Activated CD4-positive, alpha-beta T cell treated with anti-CD3 and anti-CD28 coated beads for 36 hours (primary cell): ENCODE measurements at regions of chr19 and their contacts with region 1.

Region 1: GRCh38 chr19:2782936-2783780 is at the start of gene SGTA:
- DNase-seq: peak; percentile 98
- ATAC-seq: peak; percentile 84
- H3K4me3 Mint-ChIP-seq: peak within 1 kb of the TSS; percentile 91
- H3K27ac Mint-ChIP-seq: peak within 1 kb of the TSS; percentile 98
- H3K4me1 Mint-ChIP-seq: peaks cover 58% of the 10 kb centered on the region
- H3K27me3 Mint-ChIP-seq: no peaks in the 10 kb centered on the region
- total RNA-seq, gene SGTA: 53.0 to 62.2 TPM

Region 2: GRCh38 chr19:2427429-2428320 is 355.5 kb before region 1 on chr19 and contains the start of gene TIMM13:
- CTCF ChIA-PET with region 1: no interaction called
- POLR2A ChIA-PET with region 1: no interaction called
- intact Hi-C with region 1: loop called in 1 of 2 experiments (anchors 1 kb)
- DNase-seq: peak; percentile 98
- ATAC-seq: peak; percentile 95
- H3K4me3 Mint-ChIP-seq: peak within 1 kb of the TSS; percentile 86
- H3K27ac Mint-ChIP-seq: peak within 1 kb of the TSS; percentile 96
- H3K4me1 Mint-ChIP-seq: peaks cover 5% of the 10 kb centered on the region
- H3K27me3 Mint-ChIP-seq: no peaks in the 10 kb centered on the region
- total RNA-seq, gene TIMM13: 70.7 to 104 TPM

Region 3: GRCh38 chr19:2702162-2703076 is 80.7 kb before region 1 on chr19 and contains the start of gene GNG7:
- CTCF ChIA-PET with region 1: no interaction called
- POLR2A ChIA-PET with region 1: no interaction called
- intact Hi-C with region 1: loop called in 1 of 2 experiments (anchors 1 kb)
- DNase-seq: peak; percentile 99
- ATAC-seq: peak; percentile 100
- H3K4me3 Mint-ChIP-seq: peak within 1 kb of the TSS; percentile 60
- H3K27ac Mint-ChIP-seq: peak within 1 kb of the TSS; percentile 74
- H3K4me1 Mint-ChIP-seq: peaks cover 24% of the 10 kb centered on the region
- H3K27me3 Mint-ChIP-seq: no peaks in the 10 kb centered on the region
- total RNA-seq, gene GNG7: 1.1 to 1.2 TPM

Region 4: GRCh38 chr19:2900296-2901252 is 117.4 kb after region 1 on chr19 and contains the start of gene ZNF57:
- CTCF ChIA-PET with region 1: no interaction called
- POLR2A ChIA-PET with region 1: no interaction called
- intact Hi-C with region 1: loop called in 1 of 2 experiments (anchors 1 kb)
- DNase-seq: peak; percentile 100
- ATAC-seq: peak; percentile 99
- H3K4me3 Mint-ChIP-seq: peak within 1 kb of the TSS; percentile 98
- H3K27ac Mint-ChIP-seq: peak within 1 kb of the TSS; percentile 96
- H3K4me1 Mint-ChIP-seq: peaks cover 18% of the 10 kb centered on the region
- H3K27me3 Mint-ChIP-seq: no peaks in the 10 kb centered on the region
- total RNA-seq, gene ZNF57: 5.9 to 7.1 TPM

Region 5: GRCh38 chr19:3094601-3095437 is 311.7 kb after region 1 on chr19:
- CTCF ChIA-PET with region 1: no interaction called
- POLR2A ChIA-PET with region 1: no interaction called
- intact Hi-C with region 1: loop called in 1 of 2 experiments (anchors 1 kb)
- DNase-seq: peak; percentile 68
- ATAC-seq: peak; percentile 45
- H3K4me3 Mint-ChIP-seq: peak overlapping the region; percentile 74
- H3K27ac Mint-ChIP-seq: no peak overlapping the region
- H3K4me1 Mint-ChIP-seq: peaks cover 26% of the 10 kb centered on the region
- H3K27me3 Mint-ChIP-seq: no peaks in the 10 kb centered on the region